ENCODE measurements at regions of chr21 and their contacts with region 1.

Region 1: GRCh38 chr21:37072988-37073416 is at the starts of genes PIGP and TTC3:
- H3K4me3 Mint-ChIP-seq: peak within 1 kb of the TSS; percentile 96
- H3K27ac Mint-ChIP-seq: peak within 1 kb of the TSS; percentile 92
- H3K4me1 Mint-ChIP-seq: peaks cover 41% of the 10 kb centered on the region
- H3K27me3 Mint-ChIP-seq: no peaks in the 10 kb centered on the region

Region 2: GRCh38 chr21:36156339-36156814 is 916.6 kb before region 1 on chr21:
- intact Hi-C with region 1: loop called (anchors 10 kb)
- H3K4me3 Mint-ChIP-seq: peak overlapping the region; percentile 88
- H3K27ac Mint-ChIP-seq: peak overlapping the region; percentile 82
- H3K4me1 Mint-ChIP-seq: peaks cover 49% of the 10 kb centered on the region
- H3K27me3 Mint-ChIP-seq: peaks cover 6% of the 10 kb centered on the region

Region 3: GRCh38 chr21:36989699-36990507 is 83.1 kb before region 1 on chr21:
- intact Hi-C with region 1: loop called (anchors 5 kb)
- H3K4me3 Mint-ChIP-seq: peak overlapping the region; percentile 79
- H3K27ac Mint-ChIP-seq: peak overlapping the region; percentile 91
- H3K4me1 Mint-ChIP-seq: peaks cover 6% of the 10 kb centered on the region
- H3K27me3 Mint-ChIP-seq: peaks cover 31% of the 10 kb centered on the region

Region 4: DNA sequence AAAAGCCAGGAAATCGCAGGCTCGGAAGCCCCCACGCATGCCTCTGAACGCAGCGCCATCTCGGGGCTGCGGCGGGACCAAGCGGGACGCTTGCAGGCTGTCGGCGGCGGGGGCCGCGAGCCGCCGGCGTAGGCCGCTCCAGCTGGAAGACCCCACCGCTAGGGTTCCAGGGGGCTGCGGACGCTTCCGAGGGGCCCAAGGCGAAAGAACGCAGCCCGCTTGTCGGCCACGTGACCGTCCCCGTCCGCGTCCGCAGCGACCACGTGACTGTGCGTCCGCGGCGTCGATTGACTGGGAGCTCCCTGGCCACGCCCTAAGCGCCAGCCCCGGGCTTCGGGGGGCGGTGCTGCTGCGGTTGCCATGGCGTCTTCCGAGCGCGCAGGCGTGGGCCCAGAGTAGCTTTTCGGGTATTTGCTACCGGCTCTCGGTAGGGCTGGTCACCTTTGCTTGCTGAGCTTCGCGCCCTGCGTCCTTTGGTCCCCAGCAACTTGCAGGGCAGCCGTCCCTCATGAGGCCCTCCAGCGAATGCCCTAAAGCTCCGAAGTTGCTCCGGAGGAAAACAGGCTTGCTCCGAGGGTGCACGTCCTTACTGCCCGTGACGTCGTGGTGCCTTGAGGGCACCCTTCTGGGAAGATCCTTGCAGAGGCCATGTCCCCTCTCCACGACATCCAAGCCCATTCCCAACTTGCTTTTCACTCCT is 490.8 kb after region 1 on chr21:
- intact Hi-C with region 1: loop called (anchors 10 kb)
- H3K4me3 Mint-ChIP-seq: peak overlapping the region; percentile 88
- H3K27ac Mint-ChIP-seq: peak overlapping the region; percentile 92
- H3K4me1 Mint-ChIP-seq: peaks cover 30% of the 10 kb centered on the region
- H3K27me3 Mint-ChIP-seq: peaks cover 6% of the 10 kb centered on the region